Stomach (tissue), 19 donors: ENCODE measurements at regions of chr5 and their contacts with region 1.

Region 1: DNA sequence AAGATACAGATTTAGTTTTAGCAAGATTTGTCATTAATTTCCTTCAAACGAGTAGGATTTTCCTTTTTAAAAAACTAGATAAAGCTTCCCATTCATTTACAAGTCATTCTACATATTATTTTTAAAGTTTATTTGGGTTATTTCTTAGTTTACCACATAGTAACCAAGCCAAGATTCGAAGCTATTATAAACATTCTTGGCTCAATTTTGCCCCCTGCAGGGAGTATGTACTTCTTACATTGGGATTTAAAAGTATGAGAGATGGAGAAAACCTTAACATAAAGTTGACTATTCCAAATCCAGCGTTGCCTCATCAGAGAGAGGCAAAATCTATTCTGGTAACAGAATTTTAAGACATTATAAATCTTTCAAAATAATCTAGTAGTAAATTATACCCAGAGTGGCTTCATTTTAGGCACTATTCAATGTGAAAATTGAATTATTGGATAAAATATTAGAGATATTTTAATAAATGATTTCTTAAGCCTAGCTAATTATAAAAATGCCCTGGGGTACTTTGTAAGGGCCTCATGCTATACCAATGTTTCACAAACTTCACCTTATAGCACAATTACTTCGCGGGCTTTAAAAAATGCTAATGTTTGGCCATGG is 39.1 kb downstream of the FBN2 start:
- DNase-seq: peak in 1 of 2 donors; percentile 80
- H3K4me3 ChIP-seq: no peak overlapping the region
- H3K27ac ChIP-seq: no peak overlapping the region
- H3K4me1 ChIP-seq: no peaks in the 10 kb centered on the region
- H3K27me3 ChIP-seq: no peaks in the 10 kb centered on the region
- CTCF ChIP-seq: peak in 4 of 7 experiments; percentile 24 to 46 (median 35)
- EP300 ChIP-seq: no peak
- POLR2A ChIP-seq: no peak

Region 2: DNA sequence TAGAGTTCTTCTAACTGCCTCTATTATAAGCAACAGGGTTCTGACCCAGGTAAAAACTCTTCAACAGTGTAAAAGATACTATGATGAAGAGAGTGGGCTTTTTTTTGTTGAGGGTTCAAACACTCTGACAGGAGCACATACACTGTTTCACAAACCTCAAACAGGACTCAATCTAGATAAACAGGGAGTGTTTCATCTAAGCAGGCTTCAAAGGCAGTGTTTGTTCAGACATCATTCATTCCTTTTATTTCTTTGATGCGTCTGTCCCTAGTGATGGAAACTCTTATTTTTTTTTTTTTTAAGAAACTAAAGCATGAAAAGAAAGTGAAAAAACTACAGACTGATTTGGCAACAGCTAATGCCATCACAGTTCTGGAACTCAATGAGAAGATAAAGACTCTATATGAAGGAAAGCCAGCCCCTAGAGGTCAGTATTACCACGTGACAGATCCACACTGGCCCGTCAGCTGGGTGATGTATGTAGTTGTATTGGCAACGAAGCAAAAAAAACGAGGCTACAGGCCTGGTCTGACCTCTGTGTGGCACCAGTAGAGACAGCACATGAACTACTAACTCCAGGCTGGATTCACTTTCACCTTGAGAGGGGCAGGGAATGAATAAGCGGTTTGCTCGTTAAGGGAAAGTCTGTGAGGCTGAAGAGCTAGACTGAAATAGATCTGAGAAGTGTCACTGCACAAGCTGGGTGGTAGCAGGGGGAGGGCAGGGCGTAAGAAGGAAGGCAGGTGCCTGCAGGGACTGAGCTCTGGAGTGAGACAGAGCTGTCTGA is 623.5 kb before region 1 on chr5:
- intact Hi-C with region 1: no loop called
- DNase-seq: peak; percentile 69 to 90
- H3K4me3 ChIP-seq: peak overlapping the region in 1 of 4 donors; percentile 4
- H3K27ac ChIP-seq: peak overlapping the region in 4 of 5 donors; percentile 53 to 81 (median 64)
- H3K4me1 ChIP-seq: peaks cover 8 to 42% (median 24%) of the 10 kb centered on the region in 4 donors
- H3K27me3 ChIP-seq: no peaks in the 10 kb centered on the region
- CTCF ChIP-seq: peak in 2 of 7 experiments; percentile 17 to 53
- EP300 ChIP-seq: no peak
- POLR2A ChIP-seq: no peak

Region 3: GRCh38 chr5:128213340-128213739 is 285.6 kb before region 1 on chr5:
- intact Hi-C with region 1: loop called (anchors 5 kb)
- DNase-seq: peak; percentile 50 to 91
- H3K4me3 ChIP-seq: no peak overlapping the region
- H3K27ac ChIP-seq: no peak overlapping the region
- H3K4me1 ChIP-seq: peaks cover 0 to 7% (median 3%) of the 10 kb centered on the region in 4 donors
- H3K27me3 ChIP-seq: no peaks in the 10 kb centered on the region
- CTCF ChIP-seq: peak in 5 of 7 experiments; percentile 43 to 74 (median 62)
- EP300 ChIP-seq: no peak
- POLR2A ChIP-seq: no peak